GM12878 (cell line): ENCODE measurements at regions of chr19 and their contacts with region 1.

Region 1: GRCh38 chr19:8580710-8581281 is 3.6 kb upstream of the MYO1F start:
- DNase-seq: no peak
- ATAC-seq: peak; percentile 62
- H3K4me3 ChIP-seq: no peak overlapping the region
- H3K27ac ChIP-seq: no peak overlapping the region
- H3K4me1 ChIP-seq: peaks cover 8% of the 10 kb centered on the region
- H3K27me3 ChIP-seq: peaks cover 0 to 5% of the 10 kb centered on the region in 2 experiments; a peak in 1 of 4 replicates
- CTCF ChIP-seq: peak; percentile 99
- EP300 ChIP-seq: no peak
- POLR2A ChIP-seq: no peak
- RAD21 ChIP-seq: peak; percentile 79

Region 2: GRCh38 chr19:8355631-8356402 is 225.0 kb before region 1 on chr19:
- CTCF ChIA-PET with region 1: interaction called, 29 read pairs
- POLR2A ChIA-PET with region 1: no interaction called
- RAD21 ChIA-PET with region 1: interaction called, 3 read pairs
- SMC1A ChIA-PET with region 1: interaction called, 3 read pairs
- in situ Hi-C with region 1: no loop called
- intact Hi-C with region 1: loop called (anchors 5 kb)
- DNase-seq: no peak
- ATAC-seq: peak; percentile 35; the same call in 2 of the 3 replicates
- H3K4me3 ChIP-seq: no peak overlapping the region
- H3K27ac ChIP-seq: no peak overlapping the region
- H3K4me1 ChIP-seq: no peaks in the 10 kb centered on the region
- H3K27me3 ChIP-seq: no peaks in the 10 kb centered on the region
- CTCF ChIP-seq: no peak
- EP300 ChIP-seq: no peak
- POLR2A ChIP-seq: no peak
- RAD21 ChIP-seq: no peak

Region 3: DNA sequence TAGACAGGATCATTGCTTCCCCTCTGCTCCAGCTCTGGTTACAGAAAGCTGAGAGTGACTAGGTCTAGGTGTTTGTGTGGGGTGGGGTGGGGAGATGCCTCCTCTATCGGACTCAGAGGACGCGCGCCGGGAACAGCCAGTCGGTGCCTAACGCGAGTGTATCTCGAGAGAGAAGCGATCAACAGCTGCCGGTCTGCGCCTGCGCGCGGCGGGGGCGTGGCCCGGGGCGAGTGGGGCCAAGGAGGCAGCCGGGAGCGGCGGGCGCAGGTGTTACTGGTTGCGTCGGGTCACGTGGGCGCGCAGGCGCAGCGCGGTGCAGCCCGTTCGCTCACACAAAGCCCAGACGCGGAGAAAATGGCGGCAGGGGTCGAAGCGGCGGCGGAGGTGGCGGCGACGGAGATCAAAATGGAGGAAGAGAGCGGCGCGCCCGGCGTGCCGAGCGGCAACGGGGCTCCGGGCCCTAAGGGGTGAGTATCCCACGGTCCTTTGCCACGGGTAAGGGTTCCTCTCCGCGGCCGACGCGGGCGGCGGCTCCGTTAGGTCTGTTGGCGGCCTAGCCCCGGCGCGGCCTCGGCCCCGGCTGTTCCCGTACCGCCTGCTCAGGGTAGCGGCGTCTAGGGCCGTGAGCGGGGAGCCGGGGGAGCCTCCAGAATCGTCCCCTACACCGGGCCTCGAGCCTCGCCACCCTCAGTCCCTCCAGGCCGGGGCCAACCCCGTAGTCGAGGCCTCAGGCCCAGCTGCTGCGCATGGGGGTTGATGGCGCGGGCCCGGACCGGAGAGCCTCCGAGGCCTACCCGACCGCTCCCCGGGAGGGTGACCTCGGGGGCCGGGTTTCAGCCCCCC is 135.9 kb before region 1 on chr19 and contains the start of gene HNRNPM:
- CTCF ChIA-PET with region 1: interaction called, 20 read pairs
- POLR2A ChIA-PET with region 1: interaction called, 4 read pairs
- RAD21 ChIA-PET with region 1: interaction called, 3 read pairs
- SMC1A ChIA-PET with region 1: interaction called, 5 read pairs
- in situ Hi-C with region 1: no loop called
- intact Hi-C with region 1: no loop called
- DNase-seq: peak; percentile 91
- ATAC-seq: peak; percentile 94
- H3K4me3 ChIP-seq: peak within 1 kb of the TSS; percentile 85
- H3K27ac ChIP-seq: peak within 1 kb of the TSS; percentile 85
- H3K4me1 ChIP-seq: peaks cover 8% of the 10 kb centered on the region
- H3K27me3 ChIP-seq: no peaks in the 10 kb centered on the region
- CTCF ChIP-seq: no peak
- EP300 ChIP-seq: no peak
- POLR2A ChIP-seq: peak; percentile 98
- RAD21 ChIP-seq: no peak
- polyA plus RNA-seq, gene HNRNPM: 14.3 to 35.9 TPM

Region 4: DNA sequence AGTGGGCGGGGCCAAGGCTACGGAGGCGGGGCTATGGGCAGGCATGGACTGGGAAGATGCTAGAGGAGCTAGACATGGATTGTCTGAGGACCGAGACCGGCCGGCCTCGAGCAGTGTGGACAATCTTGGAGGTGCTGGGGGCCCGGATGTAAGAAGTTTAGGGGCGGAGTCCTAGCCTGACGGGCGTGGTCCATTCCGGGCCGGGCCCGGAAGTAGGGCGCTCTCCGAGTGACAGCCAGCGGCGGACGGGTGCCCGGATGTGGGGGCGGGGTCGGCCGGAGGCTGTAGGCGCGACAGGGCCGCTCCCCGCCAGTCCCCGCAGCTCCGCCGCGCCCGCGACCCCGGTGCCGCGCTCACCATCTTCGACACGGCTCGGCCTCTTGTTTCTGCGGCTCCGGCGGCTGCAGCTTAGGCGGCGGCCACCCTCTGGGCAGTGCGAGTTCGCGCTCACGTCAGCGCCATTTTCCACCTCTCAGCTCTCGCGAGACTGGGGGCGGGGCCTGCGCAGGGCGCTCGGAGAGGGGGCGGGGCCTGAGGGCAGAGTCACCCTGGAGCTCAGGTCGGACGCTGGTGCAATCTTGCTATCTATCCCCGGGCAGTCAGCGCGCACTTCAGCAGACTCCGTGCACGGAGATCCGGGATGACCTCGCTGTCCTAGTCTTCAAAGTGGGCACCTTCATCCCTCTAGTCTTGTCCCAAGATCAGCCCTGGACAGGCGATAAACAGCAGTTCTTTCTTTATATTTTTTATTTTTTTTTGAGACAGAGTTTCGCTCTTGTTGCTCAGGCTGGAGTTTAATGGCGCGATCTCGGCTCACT is 66.9 kb before region 1 on chr19 and contains the start of gene ZNF414:
- CTCF ChIA-PET with region 1: interaction called, 18 read pairs
- POLR2A ChIA-PET with region 1: interaction called, 7 read pairs
- RAD21 ChIA-PET with region 1: interaction called, 9 read pairs
- SMC1A ChIA-PET with region 1: interaction called, 5 read pairs
- in situ Hi-C with region 1: no loop called
- intact Hi-C with region 1: loop called (anchors 2 kb)
- DNase-seq: peak; percentile 60
- ATAC-seq: peak; percentile 98
- H3K4me3 ChIP-seq: peak within 1 kb of the TSS; percentile 67
- H3K27ac ChIP-seq: peak within 1 kb of the TSS; percentile 97
- H3K4me1 ChIP-seq: peaks cover 11% of the 10 kb centered on the region; the same call in 1 of the 2 replicates
- H3K27me3 ChIP-seq: no peaks in the 10 kb centered on the region
- CTCF ChIP-seq: no peak
- EP300 ChIP-seq: no peak
- POLR2A ChIP-seq: peak; percentile 98
- RAD21 ChIP-seq: no peak
- polyA plus RNA-seq, gene ZNF414: 0.16 TPM in 1 of 2 experiments, not detected in the other

Region 5: DNA sequence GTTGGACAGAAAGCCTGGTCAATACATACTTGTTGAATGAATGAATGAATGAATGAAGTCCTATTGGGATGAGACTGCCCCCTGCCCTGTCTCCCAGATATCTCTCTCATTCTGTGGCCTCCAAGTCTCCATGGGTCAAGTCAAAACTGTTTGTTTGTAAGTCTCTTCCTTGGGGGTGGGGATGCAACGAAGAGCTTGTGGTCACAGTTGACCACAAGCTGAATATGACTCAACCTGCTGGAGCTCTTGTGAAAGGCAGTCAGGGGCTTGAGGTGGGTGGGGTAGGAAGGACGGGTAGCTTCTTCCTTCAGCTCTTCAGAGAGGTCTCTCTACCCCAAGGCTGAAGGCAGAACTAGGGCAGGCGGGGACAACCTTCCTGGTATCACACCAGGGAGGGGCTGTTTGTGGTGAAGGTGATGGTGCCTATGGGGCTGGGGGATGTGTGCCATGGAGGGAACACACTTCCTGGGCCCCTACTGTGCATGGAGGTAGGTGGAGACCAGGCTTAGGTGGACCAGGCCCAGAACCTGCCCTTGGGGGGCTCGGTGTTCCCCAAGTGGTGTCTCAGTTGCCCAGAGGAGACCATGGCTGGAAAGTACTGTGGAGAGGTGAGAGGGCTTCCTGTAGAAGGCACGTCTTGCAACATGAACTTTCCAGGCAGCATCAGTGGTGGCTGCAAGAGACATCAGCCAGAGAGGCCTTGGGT is 11.6 kb before region 1 on chr19:
- CTCF ChIA-PET with region 1: interaction called, 43 read pairs
- POLR2A ChIA-PET with region 1: interaction called, 7 read pairs
- RAD21 ChIA-PET with region 1: interaction called, 9 read pairs
- SMC1A ChIA-PET with region 1: interaction called, 7 read pairs
- in situ Hi-C with region 1: no loop called
- intact Hi-C with region 1: no loop called
- DNase-seq: peak; percentile 63
- ATAC-seq: peak; percentile 95
- H3K4me3 ChIP-seq: no peak overlapping the region
- H3K27ac ChIP-seq: peak overlapping the region; percentile 50
- H3K4me1 ChIP-seq: peaks cover 27% of the 10 kb centered on the region
- H3K27me3 ChIP-seq: no peaks in the 10 kb centered on the region
- CTCF ChIP-seq: no peak
- EP300 ChIP-seq: peak; percentile 77 to 84
- POLR2A ChIP-seq: 0 out of 2 replicates have a peak, but pooled peaks have one; percentile 40
- RAD21 ChIP-seq: peak; percentile 33; the same call in 1 of the 2 replicates

Region 6: DNA sequence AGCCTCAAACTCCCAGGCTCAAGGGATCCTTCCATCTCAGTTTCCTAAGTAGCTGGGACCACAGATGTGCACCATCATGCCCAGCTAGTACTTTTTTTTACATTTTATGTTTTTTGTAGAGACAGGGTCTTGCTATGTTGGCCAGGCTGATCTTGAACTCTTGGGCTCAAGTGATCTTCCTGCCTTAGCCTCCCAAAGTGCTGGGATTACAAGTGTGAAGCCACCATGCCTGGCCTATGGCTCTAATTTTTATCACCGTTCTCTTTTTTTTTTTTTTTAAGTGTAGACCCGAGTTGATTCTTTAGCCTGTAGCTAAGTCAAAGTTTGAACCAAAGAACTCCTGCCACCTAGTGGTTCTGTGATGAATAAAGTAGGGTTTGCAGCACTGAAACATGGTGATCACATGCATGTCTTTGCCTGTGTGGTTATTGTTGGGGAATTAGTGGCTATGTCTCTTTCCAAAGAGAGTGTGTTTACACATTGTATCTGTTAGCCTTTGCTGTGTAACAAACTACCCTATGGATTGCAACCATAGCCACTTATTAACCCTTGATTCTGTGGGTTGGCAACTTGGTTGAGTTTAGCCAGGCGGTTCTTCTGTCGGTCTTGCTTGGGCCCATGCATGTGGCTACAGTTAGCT is 61.2 kb after region 1 on chr19:
- CTCF ChIA-PET with region 1: interaction called, 15 read pairs
- POLR2A ChIA-PET with region 1: no interaction called
- RAD21 ChIA-PET with region 1: no interaction called
- SMC1A ChIA-PET with region 1: no interaction called
- in situ Hi-C with region 1: no loop called
- intact Hi-C with region 1: no loop called
- DNase-seq: no peak
- ATAC-seq: no peak
- H3K4me3 ChIP-seq: no peak overlapping the region
- H3K27ac ChIP-seq: no peak overlapping the region
- H3K4me1 ChIP-seq: no peaks in the 10 kb centered on the region
- H3K27me3 ChIP-seq: no peaks in the 10 kb centered on the region
- CTCF ChIP-seq: peak; percentile 23 to 46 (median 40); a peak in 5 of 6 replicates
- EP300 ChIP-seq: no peak
- POLR2A ChIP-seq: no peak
- RAD21 ChIP-seq: peak; percentile 48

Region 7: GRCh38 chr19:8794823-8795222 is 214.0 kb after region 1 on chr19:
- CTCF ChIA-PET with region 1: no interaction called
- POLR2A ChIA-PET with region 1: no interaction called
- RAD21 ChIA-PET with region 1: no interaction called
- SMC1A ChIA-PET with region 1: no interaction called
- in situ Hi-C with region 1: no loop called
- intact Hi-C with region 1: no loop called
- DNase-seq: no peak
- ATAC-seq: no peak
- H3K4me3 ChIP-seq: no peak overlapping the region
- H3K27ac ChIP-seq: no peak overlapping the region
- H3K4me1 ChIP-seq: no peaks in the 10 kb centered on the region
- H3K27me3 ChIP-seq: no peaks in the 10 kb centered on the region
- CTCF ChIP-seq: no peak
- EP300 ChIP-seq: no peak
- POLR2A ChIP-seq: no peak
- RAD21 ChIP-seq: no peak

Region 8: DNA sequence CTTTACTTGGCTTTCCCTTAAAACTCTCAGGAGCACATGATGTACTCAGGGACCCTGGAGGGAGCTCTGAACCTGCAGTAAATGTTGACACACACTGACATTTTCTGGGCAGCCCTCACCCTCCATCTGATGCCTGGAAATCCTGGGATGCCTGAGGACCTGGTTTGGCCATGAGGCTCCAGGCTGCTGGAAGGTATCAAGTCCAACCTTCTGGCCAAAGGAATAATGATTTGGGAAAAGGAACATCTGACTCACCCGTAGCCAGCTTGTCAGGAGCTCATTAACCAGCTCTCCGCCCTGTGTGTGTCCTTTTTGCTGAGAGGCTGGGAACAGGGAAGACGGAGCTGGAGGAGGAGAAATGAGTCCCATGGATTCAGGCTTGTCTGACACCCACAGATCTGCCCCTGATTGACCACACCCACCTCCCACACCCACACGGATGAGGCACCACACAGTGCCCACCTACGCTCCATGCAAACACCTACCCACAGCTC is 241.0 kb after region 1 on chr19:
- CTCF ChIA-PET with region 1: no interaction called
- POLR2A ChIA-PET with region 1: no interaction called
- RAD21 ChIA-PET with region 1: no interaction called
- SMC1A ChIA-PET with region 1: no interaction called
- in situ Hi-C with region 1: no loop called
- intact Hi-C with region 1: no loop called
- DNase-seq: no peak
- ATAC-seq: no peak
- H3K4me3 ChIP-seq: no peak overlapping the region
- H3K27ac ChIP-seq: no peak overlapping the region
- H3K4me1 ChIP-seq: no peaks in the 10 kb centered on the region
- H3K27me3 ChIP-seq: no peaks in the 10 kb centered on the region
- CTCF ChIP-seq: no peak
- EP300 ChIP-seq: no peak
- POLR2A ChIP-seq: no peak
- RAD21 ChIP-seq: no peak